ENCODE measurements at regions of chr10 and their contacts with region 1.

Region 1: DNA sequence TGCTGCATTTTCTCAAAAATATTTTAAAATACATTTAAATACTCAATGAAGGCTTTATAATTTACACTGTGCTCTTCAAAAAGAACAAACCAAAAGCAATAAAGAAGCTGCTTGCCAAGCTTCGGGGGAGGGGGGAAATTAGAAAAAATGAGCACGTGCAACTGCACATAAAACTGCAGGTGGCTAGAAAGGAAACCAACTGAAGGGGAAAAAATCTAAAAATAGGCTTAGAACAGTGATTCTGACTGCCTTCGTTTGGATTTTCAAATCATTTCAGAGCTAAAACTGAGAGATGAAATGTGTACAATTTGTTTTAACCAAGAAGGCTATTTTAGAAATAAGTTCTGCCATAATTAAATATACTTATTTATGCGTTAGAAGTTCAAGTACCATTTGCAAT is 61.4 kb downstream of the ABI1 start:
- DNase-seq: no peak
- H3K4me3 Mint-ChIP-seq: no peak overlapping the region
- H3K27ac Mint-ChIP-seq: no peak overlapping the region
- H3K4me1 Mint-ChIP-seq: peaks cover 43% of the 10 kb centered on the region
- H3K27me3 Mint-ChIP-seq: no peaks in the 10 kb centered on the region

Region 2: GRCh38 chr10:26755443-26755903 is 43.9 kb before region 1 on chr10:
- intact Hi-C with region 1: loop called (anchors 5 kb)
- DNase-seq: no peak
- H3K4me3 Mint-ChIP-seq: no peak overlapping the region
- H3K27ac Mint-ChIP-seq: peak overlapping the region; percentile 77
- H3K4me1 Mint-ChIP-seq: peaks cover 24% of the 10 kb centered on the region
- H3K27me3 Mint-ChIP-seq: no peaks in the 10 kb centered on the region

Region 3: DNA sequence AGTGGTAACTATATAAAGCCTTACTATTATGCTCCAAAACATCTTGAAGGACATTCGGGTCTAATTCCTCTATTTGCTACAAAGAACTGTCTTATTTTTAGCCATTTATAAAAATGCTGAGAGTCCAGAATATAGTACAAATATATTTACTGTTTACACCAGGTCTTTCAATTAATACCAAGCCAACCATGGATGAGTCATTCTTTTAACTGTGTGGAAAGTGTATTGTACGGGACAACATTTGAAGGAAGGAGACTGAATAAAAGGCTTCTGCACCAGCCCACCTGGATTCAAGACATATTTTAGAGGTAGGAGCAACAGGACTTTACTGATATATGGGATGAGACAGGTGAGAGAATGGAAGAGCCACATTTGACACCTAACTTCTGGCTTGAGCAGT is 391.2 kb after region 1 on chr10:
- intact Hi-C with region 1: no loop called
- DNase-seq: no peak
- H3K4me3 Mint-ChIP-seq: no peak overlapping the region
- H3K27ac Mint-ChIP-seq: no peak overlapping the region
- H3K4me1 Mint-ChIP-seq: no peaks in the 10 kb centered on the region
- H3K27me3 Mint-ChIP-seq: no peaks in the 10 kb centered on the region